ENCODE measurements at regions of chr3 and their contacts with region 1.

Region 1: DNA sequence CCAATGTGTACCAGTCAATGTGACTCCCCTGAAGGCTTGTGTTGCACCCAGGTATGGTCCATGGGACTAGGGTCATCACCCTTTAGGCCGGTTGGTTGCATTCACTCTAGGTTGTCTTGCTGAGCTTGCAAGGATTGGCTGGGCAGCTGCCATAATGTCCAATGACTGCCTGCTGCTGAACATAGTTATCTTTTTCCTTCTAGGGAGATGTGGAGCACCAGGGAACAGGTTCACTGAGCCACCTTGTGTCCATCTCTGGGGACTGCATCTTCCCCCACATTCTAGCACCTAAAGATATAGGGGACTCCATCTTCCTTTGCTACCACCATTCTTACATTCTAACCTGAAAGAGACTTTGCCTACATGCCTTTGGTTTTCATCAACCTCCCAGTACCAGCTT is 580.4 kb upstream of the TBL1XR1 start:
- DNase-seq: peak in 1 of 2 donors; percentile 52
- ATAC-seq: peak; percentile 48 to 69 (median 57)
- H3K4me3 ChIP-seq: no peak overlapping the region
- H3K4me3 Mint-ChIP-seq: peak overlapping the region; percentile 70
- H3K27ac ChIP-seq: no peak overlapping the region
- H3K27ac Mint-ChIP-seq: peak overlapping the region; percentile 75 to 86
- H3K4me1 ChIP-seq: peaks cover 14% of the 10 kb centered on the region
- H3K4me1 Mint-ChIP-seq: peaks cover 31 to 32% of the 10 kb centered on the region in 2 donors
- H3K27me3 ChIP-seq: no peaks in the 10 kb centered on the region
- H3K27me3 Mint-ChIP-seq: no peaks in the 10 kb centered on the region
- CTCF ChIP-seq: peak; percentile 40

Region 2: DNA sequence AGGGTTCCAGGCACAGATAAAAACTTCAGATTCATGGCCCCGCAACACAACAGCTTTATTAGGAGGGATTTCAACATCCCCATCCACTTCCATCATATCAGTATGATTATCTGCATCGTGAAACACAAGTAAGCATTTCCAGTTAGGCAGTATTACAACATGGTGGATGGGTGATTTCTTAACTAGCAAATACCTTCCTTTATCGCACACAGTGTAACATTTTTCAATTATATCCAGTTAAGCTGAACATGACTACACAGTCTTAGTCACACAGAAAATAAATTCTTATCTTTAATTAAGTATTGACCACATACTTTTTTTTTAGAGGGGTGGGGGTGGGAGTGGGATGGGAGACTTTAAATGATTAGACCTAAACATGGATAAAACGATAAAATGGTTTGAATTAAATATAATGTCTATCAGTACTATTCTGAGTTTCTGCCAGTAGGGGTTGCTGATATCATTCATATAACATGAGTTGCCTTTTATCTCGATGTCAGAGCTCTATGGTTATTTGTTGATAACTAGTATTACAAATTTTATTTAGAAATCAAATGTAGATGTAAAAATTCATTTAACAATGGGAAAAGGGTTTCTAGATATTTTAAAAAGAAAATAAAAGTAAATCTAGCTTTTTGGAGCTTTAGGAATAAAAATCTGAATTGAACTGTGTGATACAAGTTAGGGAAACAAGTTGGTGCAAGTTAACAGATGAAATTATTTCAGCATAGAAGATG is 727.0 kb before region 1 on chr3:
- intact Hi-C with region 1: loop called (anchors 10 kb)
- DNase-seq: peak in 1 of 2 donors; percentile 78
- ATAC-seq: peak; percentile 71 to 88 (median 82)
- H3K4me3 ChIP-seq: no peak overlapping the region
- H3K4me3 Mint-ChIP-seq: no peak overlapping the region
- H3K27ac ChIP-seq: no peak overlapping the region
- H3K27ac Mint-ChIP-seq: no peak overlapping the region
- H3K4me1 ChIP-seq: no peaks in the 10 kb centered on the region
- H3K4me1 Mint-ChIP-seq: peaks cover 0 to 8% of the 10 kb centered on the region in 2 donors
- H3K27me3 ChIP-seq: no peaks in the 10 kb centered on the region
- H3K27me3 Mint-ChIP-seq: no peaks in the 10 kb centered on the region
- CTCF ChIP-seq: peak; percentile 87

Region 3: GRCh38 chr3:177079684-177080083 is 698.0 kb before region 1 on chr3:
- intact Hi-C with region 1: no loop called
- DNase-seq: no peak
- ATAC-seq: no peak
- H3K4me3 ChIP-seq: no peak overlapping the region
- H3K4me3 Mint-ChIP-seq: no peak overlapping the region
- H3K27ac ChIP-seq: no peak overlapping the region
- H3K27ac Mint-ChIP-seq: peak overlapping the region; percentile 29 to 53
- H3K4me1 ChIP-seq: no peaks in the 10 kb centered on the region
- H3K4me1 Mint-ChIP-seq: peaks cover 48% of the 10 kb centered on the region in 2 donors
- H3K27me3 ChIP-seq: no peaks in the 10 kb centered on the region
- H3K27me3 Mint-ChIP-seq: no peaks in the 10 kb centered on the region
- CTCF ChIP-seq: no peak

Region 4: GRCh38 chr3:177538750-177539730 is 238.7 kb before region 1 on chr3:
- intact Hi-C with region 1: loop called (anchors 5 kb)
- DNase-seq: peak in 1 of 2 donors; percentile 62
- ATAC-seq: peak; percentile 57 to 90 (median 74)
- H3K4me3 ChIP-seq: no peak overlapping the region
- H3K4me3 Mint-ChIP-seq: peak overlapping the region; percentile 91
- H3K27ac ChIP-seq: peak overlapping the region; percentile 63
- H3K27ac Mint-ChIP-seq: peak overlapping the region; percentile 90 to 92
- H3K4me1 ChIP-seq: peaks cover 19% of the 10 kb centered on the region
- H3K4me1 Mint-ChIP-seq: peaks cover 31 to 47% of the 10 kb centered on the region in 2 donors
- H3K27me3 ChIP-seq: no peaks in the 10 kb centered on the region
- H3K27me3 Mint-ChIP-seq: no peaks in the 10 kb centered on the region
- CTCF ChIP-seq: no peak

Region 5: GRCh38 chr3:177679568-177680441 is 97.9 kb before region 1 on chr3:
- intact Hi-C with region 1: loop called (anchors 2 kb)
- DNase-seq: peak in 1 of 2 donors; percentile 35
- ATAC-seq: peak; percentile 57 to 80 (median 65)
- H3K4me3 ChIP-seq: no peak overlapping the region
- H3K4me3 Mint-ChIP-seq: peak overlapping the region; percentile 25
- H3K27ac ChIP-seq: peak overlapping the region; percentile 57
- H3K27ac Mint-ChIP-seq: peak overlapping the region; percentile 82 to 84
- H3K4me1 ChIP-seq: peaks cover 23% of the 10 kb centered on the region
- H3K4me1 Mint-ChIP-seq: peaks cover 55 to 59% of the 10 kb centered on the region in 2 donors
- H3K27me3 ChIP-seq: no peaks in the 10 kb centered on the region
- H3K27me3 Mint-ChIP-seq: no peaks in the 10 kb centered on the region
- CTCF ChIP-seq: no peak

Region 6: DNA sequence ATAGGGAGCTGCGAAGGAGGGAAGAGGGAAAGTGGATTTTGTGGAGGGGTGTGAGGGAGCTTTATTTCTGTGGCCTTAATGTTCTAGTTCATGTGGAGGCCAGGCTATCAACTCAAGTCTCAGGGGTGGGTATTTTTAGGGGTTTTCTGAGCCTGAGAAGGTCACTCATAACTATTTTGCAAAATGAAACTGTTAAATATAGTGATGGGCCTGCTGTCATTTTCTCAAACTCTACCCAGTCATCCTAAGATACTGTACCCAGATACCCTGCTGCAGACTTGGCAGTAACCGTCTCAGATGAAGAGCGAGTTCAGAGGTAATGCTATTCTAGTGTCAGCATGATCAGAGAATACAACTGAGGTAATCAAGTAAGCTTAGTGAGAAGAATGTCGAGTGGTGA is 35.4 kb before region 1 on chr3:
- intact Hi-C with region 1: no loop called
- DNase-seq: no peak
- ATAC-seq: no peak
- H3K4me3 ChIP-seq: no peak overlapping the region
- H3K4me3 Mint-ChIP-seq: no peak overlapping the region
- H3K27ac ChIP-seq: no peak overlapping the region
- H3K27ac Mint-ChIP-seq: no peak overlapping the region
- H3K4me1 ChIP-seq: no peaks in the 10 kb centered on the region
- H3K4me1 Mint-ChIP-seq: peaks cover 0 to 2% of the 10 kb centered on the region in 2 donors
- H3K27me3 ChIP-seq: no peaks in the 10 kb centered on the region
- H3K27me3 Mint-ChIP-seq: peaks cover 0 to 2% of the 10 kb centered on the region in 2 donors
- CTCF ChIP-seq: no peak

Region 7: DNA sequence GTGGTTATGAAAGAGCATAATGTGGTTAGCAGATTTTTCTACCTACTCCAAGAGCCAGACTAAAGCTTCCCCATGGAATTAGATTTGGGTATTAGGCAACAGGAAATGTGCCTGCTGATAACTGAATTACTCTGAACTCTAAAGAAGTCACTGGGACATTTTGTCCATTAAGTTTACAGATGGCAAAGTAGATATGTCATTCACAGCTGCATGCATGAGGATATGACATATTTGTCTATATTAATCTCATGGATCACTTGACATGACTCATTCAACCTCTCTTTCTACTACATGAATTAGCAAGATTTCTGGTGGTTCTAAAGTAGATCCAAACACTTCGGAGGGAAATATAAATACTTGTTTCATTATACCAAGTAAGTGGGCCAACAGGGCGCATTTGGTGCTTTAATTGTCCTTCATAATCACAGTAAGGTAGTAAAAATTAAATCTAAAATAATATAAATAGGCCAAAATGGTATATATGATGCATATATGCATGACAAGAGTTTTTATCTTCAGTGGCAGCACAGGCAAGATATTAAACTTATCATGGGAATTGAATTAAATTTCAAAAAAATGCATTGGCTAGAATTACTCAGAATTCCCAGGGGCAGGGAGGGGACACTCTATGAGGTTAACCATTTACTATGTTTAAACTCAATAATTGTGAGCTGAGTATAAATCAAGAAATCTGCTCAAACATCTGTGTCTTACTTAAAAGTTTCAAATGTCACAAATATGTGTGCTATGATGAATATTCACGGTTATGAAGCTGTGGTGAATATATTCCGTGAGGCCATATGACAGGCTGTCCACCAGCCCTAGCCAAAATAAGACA is 393.2 kb after region 1 on chr3:
- intact Hi-C with region 1: no loop called
- DNase-seq: no peak
- ATAC-seq: no peak
- H3K4me3 ChIP-seq: no peak overlapping the region
- H3K4me3 Mint-ChIP-seq: no peak overlapping the region
- H3K27ac ChIP-seq: no peak overlapping the region
- H3K27ac Mint-ChIP-seq: no peak overlapping the region
- H3K4me1 ChIP-seq: no peaks in the 10 kb centered on the region
- H3K4me1 Mint-ChIP-seq: no peaks in the 10 kb centered on the region
- H3K27me3 ChIP-seq: no peaks in the 10 kb centered on the region
- H3K27me3 Mint-ChIP-seq: peaks cover 3 to 30% of the 10 kb centered on the region in 2 donors
- CTCF ChIP-seq: no peak

Measured in natural killer cell (primary cell).